ENCODE measurements at regions of chr11 and their contacts with region 1.

Region 1: GRCh38 chr11:14907411-14908213 is 15.6 kb upstream of the CYP2R1 start:
- DNase-seq: peak; percentile 94
- ATAC-seq: peak; percentile 75
- H3K4me3 Mint-ChIP-seq: no peak overlapping the region
- H3K27ac Mint-ChIP-seq: no peak overlapping the region
- H3K4me1 Mint-ChIP-seq: peaks cover 41% of the 10 kb centered on the region
- H3K27me3 Mint-ChIP-seq: no peaks in the 10 kb centered on the region

Region 2: DNA sequence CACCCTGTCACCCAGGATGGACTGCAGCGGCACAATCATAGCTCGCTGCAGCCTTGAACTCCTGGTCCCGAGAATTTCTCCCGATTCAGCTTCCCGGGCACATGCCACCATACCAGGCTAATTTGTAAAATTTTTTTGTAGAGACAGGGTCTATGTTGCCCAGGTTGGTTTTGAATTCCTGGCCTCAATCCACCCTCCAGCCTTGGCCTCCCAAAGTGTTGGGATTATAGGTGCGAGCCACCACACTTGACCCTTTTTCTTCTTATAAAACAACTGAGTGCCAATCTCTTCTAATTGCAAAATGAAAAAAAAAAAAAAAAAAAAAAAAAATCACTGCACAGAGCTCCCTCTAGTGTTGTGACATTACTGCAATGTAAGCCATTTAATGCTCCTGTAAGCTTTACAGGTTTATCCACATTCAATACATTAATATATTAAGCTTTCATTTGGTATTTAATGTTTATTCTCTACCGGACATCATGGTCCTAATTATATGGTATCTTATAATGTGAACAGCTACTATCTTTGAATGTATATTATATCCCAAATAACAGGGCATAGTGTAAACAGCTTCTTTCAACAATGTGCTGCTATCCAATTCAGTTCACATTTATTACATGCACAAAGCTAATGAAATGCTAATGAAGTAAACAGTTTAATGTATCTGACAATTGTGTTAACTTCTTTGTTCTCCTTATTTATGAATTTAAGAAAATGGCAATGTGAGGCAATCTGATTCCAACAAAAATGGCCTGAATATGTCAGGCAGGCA is 452.6 kb before region 1 on chr11:
- CTCF ChIA-PET with region 1: interaction called, 18 read pairs
- POLR2A ChIA-PET with region 1: no interaction called
- intact Hi-C with region 1: no loop called
- DNase-seq: no peak
- ATAC-seq: peak; percentile 39
- H3K4me3 Mint-ChIP-seq: no peak overlapping the region
- H3K27ac Mint-ChIP-seq: no peak overlapping the region
- H3K4me1 Mint-ChIP-seq: no peaks in the 10 kb centered on the region
- H3K27me3 Mint-ChIP-seq: no peaks in the 10 kb centered on the region

Region 3: GRCh38 chr11:14544611-14545010 is 363.0 kb before region 1 on chr11:
- CTCF ChIA-PET with region 1: interaction called, 19 read pairs
- POLR2A ChIA-PET with region 1: no interaction called
- intact Hi-C with region 1: no loop called
- DNase-seq: no peak
- ATAC-seq: peak; percentile 79
- H3K4me3 Mint-ChIP-seq: no peak overlapping the region
- H3K27ac Mint-ChIP-seq: peak overlapping the region; percentile 72
- H3K4me1 Mint-ChIP-seq: peaks cover 40% of the 10 kb centered on the region
- H3K27me3 Mint-ChIP-seq: no peaks in the 10 kb centered on the region

Region 4: GRCh38 chr11:14773755-14774154 is 133.9 kb before region 1 on chr11:
- CTCF ChIA-PET with region 1: interaction called, 10 read pairs
- POLR2A ChIA-PET with region 1: interaction called, 3 read pairs
- intact Hi-C with region 1: no loop called
- DNase-seq: peak; percentile 25
- ATAC-seq: peak; percentile 58
- H3K4me3 Mint-ChIP-seq: no peak overlapping the region
- H3K27ac Mint-ChIP-seq: peak overlapping the region; percentile 48
- H3K4me1 Mint-ChIP-seq: peaks cover 55% of the 10 kb centered on the region
- H3K27me3 Mint-ChIP-seq: no peaks in the 10 kb centered on the region

Region 5: DNA sequence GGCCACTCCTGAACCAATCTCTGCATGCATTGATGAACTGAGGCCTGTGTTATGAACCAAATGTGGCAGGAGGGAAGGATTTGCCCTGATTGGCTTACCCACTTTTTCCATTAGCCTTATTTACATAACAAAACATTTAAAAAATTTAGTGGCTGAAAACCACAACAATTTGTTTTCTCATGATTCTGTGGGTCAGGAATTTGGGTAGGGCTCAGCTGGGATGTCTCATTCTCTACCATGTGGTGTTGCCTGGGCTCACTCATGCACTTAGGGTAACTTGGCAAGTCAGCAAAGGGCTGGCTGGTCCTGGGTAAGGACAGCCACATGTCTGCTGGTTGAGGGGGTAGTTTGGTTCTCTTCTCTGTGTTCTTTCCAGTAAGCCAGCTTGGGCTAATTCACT is 19.5 kb after region 1 on chr11:
- CTCF ChIA-PET with region 1: interaction called, 63 read pairs
- POLR2A ChIA-PET with region 1: no interaction called
- intact Hi-C with region 1: no loop called
- DNase-seq: no peak
- ATAC-seq: no peak
- H3K4me3 Mint-ChIP-seq: no peak overlapping the region
- H3K27ac Mint-ChIP-seq: no peak overlapping the region
- H3K4me1 Mint-ChIP-seq: no peaks in the 10 kb centered on the region
- H3K27me3 Mint-ChIP-seq: no peaks in the 10 kb centered on the region

Region 6: DNA sequence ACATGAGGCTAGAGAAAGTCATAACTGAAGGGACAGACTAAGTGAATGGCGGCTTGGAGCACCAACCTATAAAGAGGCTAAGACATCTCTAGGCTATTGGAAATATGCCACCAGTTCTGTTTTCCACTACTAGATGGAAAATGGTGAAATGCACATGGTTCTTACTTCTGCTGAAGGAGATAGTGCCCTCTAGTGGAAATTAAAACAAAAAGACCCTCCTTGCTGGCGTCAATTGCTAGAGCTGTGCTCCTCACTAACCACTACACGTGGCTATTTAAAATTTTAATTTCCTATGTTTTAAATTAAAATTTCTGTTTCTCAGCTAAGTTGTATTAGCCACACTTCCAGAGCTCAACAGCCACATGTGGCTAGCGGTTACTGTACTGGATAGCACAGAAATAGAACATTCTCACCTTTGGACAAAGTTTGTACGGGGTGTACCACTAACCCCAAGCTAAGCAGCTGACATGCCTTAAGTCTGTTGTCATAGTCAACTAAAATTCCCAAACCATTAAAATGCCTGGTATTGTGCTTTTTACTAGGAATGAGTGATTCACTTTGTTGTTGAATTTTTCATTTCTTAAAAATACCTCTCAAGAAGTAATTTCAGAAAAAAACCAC is 98.6 kb after region 1 on chr11:
- CTCF ChIA-PET with region 1: interaction called, 74 read pairs
- POLR2A ChIA-PET with region 1: no interaction called
- intact Hi-C with region 1: loop called (anchors 1 kb)
- DNase-seq: peak; percentile 17
- ATAC-seq: peak; percentile 72
- H3K4me3 Mint-ChIP-seq: no peak overlapping the region
- H3K27ac Mint-ChIP-seq: no peak overlapping the region
- H3K4me1 Mint-ChIP-seq: no peaks in the 10 kb centered on the region
- H3K27me3 Mint-ChIP-seq: peaks cover 21% of the 10 kb centered on the region

Region 7: GRCh38 chr11:16440136-16440535 is 1532.5 kb after region 1 on chr11:
- CTCF ChIA-PET with region 1: no interaction called
- POLR2A ChIA-PET with region 1: no interaction called
- intact Hi-C with region 1: no loop called
- DNase-seq: no peak
- ATAC-seq: no peak
- H3K4me3 Mint-ChIP-seq: no peak overlapping the region
- H3K27ac Mint-ChIP-seq: no peak overlapping the region
- H3K4me1 Mint-ChIP-seq: no peaks in the 10 kb centered on the region
- H3K27me3 Mint-ChIP-seq: no peaks in the 10 kb centered on the region

Measured in activated CD4-positive, alpha-beta T cell treated with anti-CD3 and anti-CD28 coated beads for 36 hours (primary cell).